Lower leg skin (tissue), 4 donors: ENCODE measurements at regions of chr3 and their contacts with region 1.

Region 1: DNA sequence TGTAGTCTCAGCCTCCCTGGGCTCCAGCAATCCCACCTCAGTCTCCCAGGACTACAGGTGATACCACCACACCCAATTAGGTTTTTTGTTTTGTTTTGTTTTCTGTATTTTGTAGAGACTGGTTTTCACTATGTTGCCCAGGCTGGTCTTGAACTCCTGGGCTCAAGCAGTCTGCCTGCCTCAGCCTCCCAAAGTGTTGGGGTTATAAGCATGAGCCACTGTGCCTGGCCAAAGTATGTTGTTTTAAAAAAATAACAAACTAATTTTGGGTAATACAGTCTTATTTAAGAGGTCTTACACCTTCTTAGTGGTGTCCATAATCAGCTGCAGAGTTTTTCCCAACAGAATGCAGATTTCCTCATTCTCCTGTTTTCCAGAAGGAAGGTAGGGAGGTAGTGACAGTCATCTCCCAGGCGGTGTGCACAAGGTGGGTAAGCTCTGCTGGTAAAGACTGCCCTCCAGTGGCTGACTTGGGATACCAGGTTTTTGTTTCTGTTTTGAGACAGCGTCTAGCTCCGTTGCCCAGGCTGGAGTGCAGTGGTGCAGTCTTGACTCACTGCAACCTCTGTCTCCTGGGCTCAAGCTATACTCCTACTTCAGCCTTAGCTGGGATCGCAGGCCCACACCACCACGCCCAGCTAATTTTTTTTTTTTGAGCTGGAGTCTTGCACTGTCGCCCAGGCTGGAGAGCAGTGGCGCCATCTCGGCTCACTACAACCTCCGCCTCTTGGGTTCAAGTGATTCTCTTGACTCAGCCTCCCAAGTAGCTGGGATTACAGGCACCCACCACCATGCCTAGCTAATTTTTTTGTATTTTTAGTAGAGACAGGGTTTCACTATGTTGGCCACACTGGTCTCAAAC is 58.4 kb downstream of the MAP6D1 start:
- DNase-seq: peak; percentile 65 to 93
- H3K4me3 ChIP-seq: no peak overlapping the region
- CTCF ChIP-seq: peak in 1 of 3 donors; percentile 70
- POLR2A ChIP-seq: no peak

Region 2: DNA sequence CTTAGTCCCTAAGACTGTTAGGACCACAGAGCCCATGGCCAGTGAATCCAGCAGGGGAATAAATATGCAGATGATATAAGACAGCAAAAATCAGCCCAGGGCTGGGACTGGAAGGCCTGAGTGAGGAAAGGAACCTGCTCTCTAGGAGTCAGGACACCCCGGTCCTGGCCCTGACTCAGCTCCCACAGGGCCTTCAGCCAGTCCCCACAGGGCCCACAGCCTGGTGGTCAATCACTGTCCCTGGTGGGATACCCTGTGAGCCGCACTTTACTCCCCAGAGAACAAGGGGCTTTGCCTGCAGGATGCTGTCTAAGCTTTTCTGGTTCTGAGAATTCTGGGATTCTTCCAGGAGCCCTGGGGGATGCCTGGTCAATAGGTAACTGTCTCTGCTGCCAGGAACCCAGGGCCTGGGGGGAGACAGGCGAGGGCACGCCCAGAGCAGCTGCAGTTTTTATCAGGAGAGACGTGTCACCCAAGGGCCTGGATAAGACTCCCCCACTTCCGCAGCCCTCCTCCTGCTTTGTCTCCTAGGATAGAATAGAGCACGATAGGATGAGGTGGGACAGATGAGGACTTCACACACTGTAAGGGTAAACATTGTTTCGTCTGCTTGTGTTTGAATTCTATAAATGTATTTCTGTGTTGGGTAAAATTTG is 289.0 kb before region 1 on chr3:
- intact Hi-C with region 1: loop called (anchors 10 kb)
- DNase-seq: peak in 1 of 2 donors; percentile 53
- H3K4me3 ChIP-seq: no peak overlapping the region
- CTCF ChIP-seq: no peak
- POLR2A ChIP-seq: no peak

Region 3: GRCh38 chr3:183613366-183614285 is 153.3 kb before region 1 on chr3:
- intact Hi-C with region 1: no loop called
- DNase-seq: no peak
- H3K4me3 ChIP-seq: no peak overlapping the region
- CTCF ChIP-seq: no peak
- POLR2A ChIP-seq: no peak

Region 4: DNA sequence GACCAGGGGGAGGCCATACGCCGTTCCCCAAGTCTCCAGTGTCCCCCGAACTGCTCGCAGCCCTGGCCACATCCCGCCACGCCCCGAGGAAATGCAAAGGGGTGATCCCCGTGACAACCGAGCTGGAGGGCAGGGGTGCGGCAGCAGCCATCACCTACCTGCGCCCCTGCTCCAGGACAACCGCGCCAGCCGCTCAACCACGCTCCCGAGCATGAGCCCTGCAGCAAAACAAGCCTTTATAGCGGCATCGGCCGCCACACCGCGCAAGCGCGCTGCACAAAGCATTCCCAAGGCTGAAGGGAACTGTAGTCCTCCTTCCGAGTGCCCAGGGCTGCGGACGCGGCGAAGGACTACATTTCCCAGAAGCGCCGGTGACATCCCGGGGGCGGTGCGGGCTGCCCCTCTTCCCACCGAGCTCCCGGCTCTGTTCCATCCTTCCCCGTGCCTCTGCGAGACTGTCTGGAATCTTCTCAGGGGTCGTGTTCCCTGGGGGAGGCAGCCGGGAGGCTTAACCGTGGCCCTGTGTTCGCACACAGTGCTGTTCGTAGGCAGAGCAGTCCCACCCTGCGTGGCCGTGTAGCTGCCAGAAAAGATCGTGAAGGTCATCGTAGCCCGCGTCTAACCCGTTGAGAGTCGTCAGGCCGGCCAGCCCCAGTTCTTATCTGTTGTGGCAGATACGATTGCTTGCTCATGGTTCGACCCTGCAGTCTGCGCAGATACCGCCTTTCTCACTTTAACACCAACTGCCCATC is 250.9 kb after region 1 on chr3 and contains the start of gene ABCC5:
- intact Hi-C with region 1: no loop called
- DNase-seq: peak; percentile 89 to 97
- H3K4me3 ChIP-seq: peak within 1 kb of the TSS; percentile 99
- CTCF ChIP-seq: peak in 1 of 3 donors; percentile 4
- POLR2A ChIP-seq: no peak
- total RNA-seq, gene ABCC5: 8.9 to 14.3 (median 11.9) TPM